Posterior cingulate gyrus (tissue), 11 donors: ENCODE measurements at regions of chr3 and their contacts with region 1.

Region 1: DNA sequence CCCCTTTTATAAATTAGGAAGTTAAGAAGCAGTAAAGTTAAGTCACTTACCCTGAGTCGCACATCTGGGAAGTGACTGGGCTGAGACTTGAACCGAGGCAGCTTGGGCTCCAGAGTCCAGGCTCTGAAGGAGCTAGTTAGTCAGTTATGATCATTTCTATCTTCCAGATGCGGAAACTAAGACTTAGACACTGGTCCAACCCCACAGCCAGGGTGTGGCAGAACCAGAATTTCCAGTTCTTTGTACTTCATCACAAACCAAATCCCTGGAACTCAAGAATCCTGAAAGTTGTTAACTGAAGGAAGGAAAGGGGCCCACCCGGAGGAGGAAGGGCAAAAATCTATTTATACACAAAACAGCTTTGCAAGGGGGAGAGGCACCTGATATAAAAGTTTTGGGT is 389.9 kb downstream of the SHQ1 start:
- DNase-seq: no peak

Region 2: DNA sequence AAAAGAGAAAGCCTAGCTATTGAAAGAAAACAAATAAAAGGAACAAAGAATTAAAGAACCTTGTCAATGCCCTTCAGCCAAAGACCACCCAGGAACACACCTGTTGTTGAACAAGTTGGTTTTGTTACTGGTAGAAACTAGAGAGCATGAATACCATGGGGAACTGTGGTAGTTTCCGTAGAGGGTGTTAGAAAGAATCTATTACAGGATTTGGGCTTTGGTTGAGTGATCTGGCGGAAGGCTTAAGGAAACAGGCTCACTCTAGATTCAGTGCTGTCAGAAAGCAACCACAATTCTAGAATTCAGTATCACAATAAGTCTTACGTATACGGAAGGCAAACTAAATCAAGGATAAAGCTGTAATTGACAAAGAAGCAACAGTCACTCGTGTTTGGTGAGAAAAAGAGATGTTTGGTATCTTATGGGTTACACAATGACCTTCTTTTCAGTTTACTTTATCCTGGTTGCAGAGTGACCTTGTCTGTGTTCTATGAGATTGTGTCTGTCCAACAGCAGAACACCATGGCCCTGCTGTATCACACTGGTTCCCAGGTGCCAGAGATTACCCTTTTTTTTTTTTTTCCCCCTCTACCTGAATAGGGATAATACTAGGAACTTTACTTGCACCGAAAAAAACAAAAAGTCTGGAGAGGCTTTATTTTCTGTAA is 124.0 kb after region 1 on chr3:
- intact Hi-C with region 1: no loop called
- DNase-seq: no peak

Region 3: DNA sequence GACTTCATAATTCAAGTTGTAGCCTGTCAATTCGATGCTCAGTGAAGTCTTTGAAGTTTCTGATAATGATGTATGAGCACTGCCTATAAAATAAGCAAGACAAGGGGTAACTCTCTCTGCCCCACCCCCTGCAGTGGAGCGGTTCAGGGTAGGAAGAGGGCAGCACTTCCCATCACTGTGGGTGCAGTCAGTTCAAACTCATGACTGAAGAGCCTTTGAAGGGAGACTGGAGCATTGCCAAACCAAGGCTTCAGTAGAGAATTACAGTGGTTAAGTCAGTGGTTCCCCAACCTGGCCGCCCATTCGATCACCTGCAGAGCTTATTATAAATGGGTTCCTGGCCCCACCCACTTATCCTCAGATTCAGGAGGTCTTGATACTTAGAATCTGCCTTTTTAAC is 199.3 kb after region 1 on chr3:
- intact Hi-C with region 1: loop called (anchors 10 kb)
- DNase-seq: peak in 2 of 10 donors; percentile 28 to 73